Left colon (tissue), 2 donors: ENCODE measurements at regions of chr22 and their contacts with region 1.

Region 1: DNA sequence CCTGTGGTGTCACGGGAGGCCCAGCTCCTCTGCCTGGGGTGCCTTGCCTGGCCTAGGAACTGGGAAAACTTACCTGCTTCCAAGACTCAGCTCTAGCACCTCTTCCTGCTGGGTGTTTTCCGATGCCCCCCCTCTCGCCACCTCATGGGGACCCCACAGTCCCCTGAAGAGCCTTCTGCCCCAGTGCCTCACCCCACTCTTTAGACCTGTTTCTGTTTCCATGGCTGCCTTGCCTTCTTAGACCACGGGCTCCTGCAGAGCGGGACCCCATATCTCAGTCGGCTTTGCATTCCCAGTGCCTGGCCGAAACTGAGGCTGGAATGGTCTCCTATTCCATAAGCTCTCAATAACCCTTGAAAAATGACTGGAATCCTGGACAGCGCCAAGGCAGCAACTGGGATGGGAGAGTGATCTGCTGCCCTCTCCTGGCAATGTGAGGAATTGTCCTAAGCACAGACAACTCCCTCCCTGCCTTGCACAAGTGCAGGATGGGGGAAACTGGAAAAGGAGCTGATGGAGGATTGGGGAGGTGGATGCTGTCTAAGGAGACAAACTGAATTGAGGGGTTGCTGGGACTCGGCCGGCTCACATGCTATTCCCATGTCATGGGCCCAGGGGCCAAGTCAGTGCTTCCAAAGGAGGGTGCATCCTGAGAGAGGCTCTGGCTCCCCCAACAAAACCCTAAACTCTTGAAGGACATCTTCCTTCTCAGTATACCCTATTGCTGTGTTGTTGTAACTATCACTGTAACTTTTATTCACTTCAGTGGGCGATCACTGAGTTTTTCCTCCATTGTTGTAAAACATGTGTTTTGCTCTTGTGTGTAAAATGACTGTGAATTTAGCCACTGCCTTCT is 26.6 kb upstream of the IL17RA start:
- DNase-seq: peak; percentile 31 to 53
- ATAC-seq: peak; percentile 77

Region 2: GRCh38 chr22:16783930-16784354 is 274.2 kb before region 1 on chr22:
- intact Hi-C with region 1: no loop called
- DNase-seq: no peak
- ATAC-seq: no peak

Region 3: DNA sequence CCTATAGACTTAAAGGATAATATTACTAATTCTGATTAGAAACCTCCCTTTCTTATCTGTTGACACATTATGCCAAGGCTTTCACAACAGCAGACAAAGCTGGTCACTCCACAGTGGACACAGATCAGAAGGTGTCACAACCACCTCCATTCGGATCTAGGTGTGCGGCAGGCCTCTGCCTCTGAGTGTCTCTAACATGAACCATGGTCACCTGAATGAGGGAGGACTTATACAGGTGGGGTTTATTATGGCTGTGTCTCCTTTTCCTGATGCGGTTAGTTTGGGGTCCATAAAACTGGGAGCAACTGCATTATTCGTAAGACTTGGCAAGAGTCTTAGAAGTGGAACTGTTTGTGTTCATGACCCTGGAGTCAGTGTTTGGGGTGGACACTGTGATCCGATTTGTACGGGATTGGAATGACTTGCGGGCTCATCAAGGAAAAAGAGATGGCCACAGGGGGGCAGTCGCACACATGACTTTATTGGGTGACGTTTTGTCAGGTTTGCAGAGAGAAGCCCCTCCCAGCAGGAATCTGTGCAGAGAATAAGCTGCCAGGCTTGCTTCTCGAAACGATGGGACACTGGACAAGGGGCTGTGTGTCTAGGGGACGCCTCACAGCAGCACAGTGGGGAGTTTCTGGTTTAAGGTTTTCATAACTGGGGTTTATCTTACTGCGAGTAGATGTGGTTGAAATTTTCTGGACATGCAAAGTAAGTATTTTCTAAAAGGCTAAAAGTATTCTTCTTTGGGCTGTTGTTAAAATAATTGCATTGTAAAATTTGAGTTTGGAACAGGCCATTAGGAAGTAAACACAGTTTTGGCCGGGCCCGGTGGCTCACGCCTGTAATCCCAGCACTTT is 140.8 kb before region 1 on chr22:
- intact Hi-C with region 1: loop called in 1 of 2 experiments (anchors 5 kb)
- DNase-seq: peak in 1 of 2 donors; percentile 69
- ATAC-seq: peak; percentile 51

Region 4: DNA sequence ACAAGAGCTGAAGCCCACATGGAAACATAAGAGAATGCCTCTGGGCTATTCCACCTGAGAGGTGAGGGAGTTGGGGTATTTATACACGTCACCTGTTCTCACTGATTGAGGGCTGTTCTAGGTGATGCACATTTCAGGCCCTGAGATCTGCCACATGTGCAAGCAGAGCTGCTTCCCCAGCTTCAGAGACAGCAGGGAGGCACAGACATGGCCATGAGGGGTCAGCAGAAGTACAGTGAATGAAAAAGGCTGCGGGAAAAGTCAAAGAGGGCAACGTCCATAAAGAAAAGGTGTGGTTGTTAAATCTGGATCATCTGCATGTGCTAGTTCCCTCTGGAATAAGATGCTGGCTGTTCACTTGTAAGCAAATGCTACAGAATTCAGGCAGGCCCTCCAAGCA is 125.6 kb before region 1 on chr22:
- intact Hi-C with region 1: loop called in 1 of 2 experiments (anchors 5 kb)
- DNase-seq: no peak
- ATAC-seq: no peak